GM12878 (cell line): ENCODE measurements at regions of chr19 and their contacts with region 1.

Region 1: GRCh38 chr19:58326914-58327726 is at the start of gene ZSCAN22:
- DNase-seq: peak; percentile 68
- ATAC-seq: peak; percentile 95
- H3K4me3 ChIP-seq: peak within 1 kb of the TSS; percentile 74
- H3K27ac ChIP-seq: peak within 1 kb of the TSS; percentile 79
- H3K4me1 ChIP-seq: peaks cover 5% of the 10 kb centered on the region
- H3K27me3 ChIP-seq: no peaks in the 10 kb centered on the region
- CTCF ChIP-seq: no peak
- EP300 ChIP-seq: no peak
- POLR2A ChIP-seq: peak; percentile 88
- RAD21 ChIP-seq: no peak
- polyA plus RNA-seq, gene ZSCAN22: 0.49 to 1.7 TPM

Region 2: GRCh38 chr19:58305065-58305931 is 21.8 kb before region 1 on chr19 and contains the start of gene ERVK3-1:
- CTCF ChIA-PET with region 1: interaction called, 3 read pairs
- POLR2A ChIA-PET with region 1: interaction called, 5 read pairs
- RAD21 ChIA-PET with region 1: interaction called, 6 read pairs
- SMC1A ChIA-PET with region 1: interaction called, 4 read pairs
- in situ Hi-C with region 1: no loop called
- intact Hi-C with region 1: loop called (anchors 2 kb)
- DNase-seq: peak; percentile 91
- ATAC-seq: peak; percentile 98
- H3K4me3 ChIP-seq: peak within 1 kb of the TSS; percentile 97
- H3K27ac ChIP-seq: peak within 1 kb of the TSS; percentile 92
- H3K4me1 ChIP-seq: 0 out of 2 replicates have a peak, but pooled peaks cover 3% of the 10 kb centered on the region
- H3K27me3 ChIP-seq: no peaks in the 10 kb centered on the region
- CTCF ChIP-seq: no peak
- EP300 ChIP-seq: no peak
- POLR2A ChIP-seq: peak; percentile 100
- RAD21 ChIP-seq: no peak
- polyA plus RNA-seq, gene ERVK3-1: 150 to 172 TPM

Region 3: GRCh38 chr19:58346961-58347931 is 20.1 kb after region 1 on chr19:
- CTCF ChIA-PET with region 1: interaction called, 4 read pairs
- POLR2A ChIA-PET with region 1: interaction called, 10 read pairs
- RAD21 ChIA-PET with region 1: interaction called, 7 read pairs
- SMC1A ChIA-PET with region 1: interaction called, 5 read pairs
- in situ Hi-C with region 1: no loop called
- intact Hi-C with region 1: no loop called
- DNase-seq: no peak
- ATAC-seq: peak; percentile 98
- H3K4me3 ChIP-seq: peak overlapping the region; percentile 87
- H3K27ac ChIP-seq: peak overlapping the region; percentile 44; the same call in 1 of the 2 replicates
- H3K4me1 ChIP-seq: 0 out of 2 replicates have a peak, but pooled peaks cover 3% of the 10 kb centered on the region
- H3K27me3 ChIP-seq: no peaks in the 10 kb centered on the region
- CTCF ChIP-seq: no peak
- EP300 ChIP-seq: no peak
- POLR2A ChIP-seq: peak; percentile 76
- RAD21 ChIP-seq: no peak

Region 4: GRCh38 chr19:58362272-58362994 is 35.3 kb after region 1 on chr19 and contains the start of gene ZNF497:
- CTCF ChIA-PET with region 1: no interaction called
- POLR2A ChIA-PET with region 1: interaction called, 5 read pairs
- RAD21 ChIA-PET with region 1: interaction called, 6 read pairs
- SMC1A ChIA-PET with region 1: interaction called, 4 read pairs
- in situ Hi-C with region 1: no loop called
- intact Hi-C with region 1: loop called (anchors 1 kb)
- DNase-seq: peak; percentile 86
- ATAC-seq: peak; percentile 95
- H3K4me3 ChIP-seq: peak within 1 kb of the TSS; percentile 79
- H3K27ac ChIP-seq: peak within 1 kb of the TSS; percentile 86
- H3K4me1 ChIP-seq: peaks cover 14% of the 10 kb centered on the region
- H3K27me3 ChIP-seq: no peaks in the 10 kb centered on the region
- CTCF ChIP-seq: peak in 2 of 3 experiments; percentile 5 to 6; a peak in 2 of 6 replicates
- EP300 ChIP-seq: 0 out of 4 replicates have a peak, but pooled peaks of 1 of the 2 experiments have one; percentile 8
- POLR2A ChIP-seq: peak; percentile 78
- RAD21 ChIP-seq: no peak
- polyA plus RNA-seq, gene ZNF497: 0.16 TPM

Region 5: GRCh38 chr19:58380722-58381466 is 53.8 kb after region 1 on chr19 and contains the start of gene ZNF837:
- CTCF ChIA-PET with region 1: no interaction called
- POLR2A ChIA-PET with region 1: interaction called, 3 read pairs
- RAD21 ChIA-PET with region 1: interaction called, 3 read pairs
- SMC1A ChIA-PET with region 1: interaction called, 3 read pairs
- in situ Hi-C with region 1: no loop called
- intact Hi-C with region 1: loop called (anchors 2 kb)
- DNase-seq: peak; percentile 99
- ATAC-seq: peak; percentile 90
- H3K4me3 ChIP-seq: peak within 1 kb of the TSS; percentile 87
- H3K27ac ChIP-seq: peak within 1 kb of the TSS; percentile 85
- H3K4me1 ChIP-seq: peaks cover 22% of the 10 kb centered on the region
- H3K27me3 ChIP-seq: no peaks in the 10 kb centered on the region
- CTCF ChIP-seq: no peak
- EP300 ChIP-seq: no peak
- POLR2A ChIP-seq: peak; percentile 87
- RAD21 ChIP-seq: no peak
- polyA plus RNA-seq, gene ZNF837: not detected

Region 6: DNA sequence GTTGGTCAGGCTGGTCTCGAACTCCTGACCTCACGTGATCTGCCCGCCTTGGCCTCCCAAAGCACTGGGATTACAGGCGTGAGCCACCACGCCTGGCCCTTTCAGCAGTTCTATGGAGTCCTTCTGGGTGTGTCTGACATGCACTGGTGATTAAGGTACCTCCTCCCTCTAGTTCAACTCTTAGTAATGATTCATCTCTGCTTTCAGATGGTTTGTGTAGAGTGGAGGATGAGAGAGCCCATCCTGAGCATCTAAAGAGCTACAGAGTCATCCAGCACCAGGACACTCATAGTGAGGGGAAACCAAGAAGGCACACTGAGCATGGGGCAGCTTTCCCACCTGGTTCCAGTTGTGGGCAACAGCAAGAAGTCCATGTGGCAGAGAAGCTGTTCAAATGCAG is 89.5 kb after region 1 on chr19:
- CTCF ChIA-PET with region 1: no interaction called
- POLR2A ChIA-PET with region 1: no interaction called
- RAD21 ChIA-PET with region 1: no interaction called
- SMC1A ChIA-PET with region 1: no interaction called
- in situ Hi-C with region 1: no loop called
- intact Hi-C with region 1: no loop called
- DNase-seq: no peak
- ATAC-seq: no peak
- H3K4me3 ChIP-seq: no peak overlapping the region
- H3K27ac ChIP-seq: no peak overlapping the region
- H3K4me1 ChIP-seq: no peaks in the 10 kb centered on the region
- H3K27me3 ChIP-seq: no peaks in the 10 kb centered on the region
- CTCF ChIP-seq: no peak
- EP300 ChIP-seq: no peak
- POLR2A ChIP-seq: no peak
- RAD21 ChIP-seq: no peak

Region 7: GRCh38 chr19:58466760-58467589 is 139.9 kb after region 1 on chr19 and contains the start of gene ZNF324:
- CTCF ChIA-PET with region 1: interaction called, 3 read pairs
- POLR2A ChIA-PET with region 1: no interaction called
- RAD21 ChIA-PET with region 1: no interaction called
- SMC1A ChIA-PET with region 1: no interaction called
- in situ Hi-C with region 1: no loop called
- intact Hi-C with region 1: loop called (anchors 5 kb)
- DNase-seq: peak; percentile 76
- ATAC-seq: peak; percentile 93
- H3K4me3 ChIP-seq: peak within 1 kb of the TSS; percentile 81
- H3K27ac ChIP-seq: peak within 1 kb of the TSS; percentile 51; the same call in 1 of the 2 replicates
- H3K4me1 ChIP-seq: peaks cover 14% of the 10 kb centered on the region
- H3K27me3 ChIP-seq: no peaks in the 10 kb centered on the region
- CTCF ChIP-seq: no peak
- EP300 ChIP-seq: no peak
- POLR2A ChIP-seq: peak; percentile 88
- RAD21 ChIP-seq: no peak
- polyA plus RNA-seq, gene ZNF324: 0.71 to 2.1 TPM